GM10248 (cell line): ENCODE measurements at regions of chr6 and their contacts with region 1.

Region 1: GRCh38 chr6:70884074-70884983 is 72.5 kb downstream of the B3GAT2 start:
- DNase-seq: peak; percentile 80
- CTCF ChIP-seq: peak; percentile 90

Region 2: DNA sequence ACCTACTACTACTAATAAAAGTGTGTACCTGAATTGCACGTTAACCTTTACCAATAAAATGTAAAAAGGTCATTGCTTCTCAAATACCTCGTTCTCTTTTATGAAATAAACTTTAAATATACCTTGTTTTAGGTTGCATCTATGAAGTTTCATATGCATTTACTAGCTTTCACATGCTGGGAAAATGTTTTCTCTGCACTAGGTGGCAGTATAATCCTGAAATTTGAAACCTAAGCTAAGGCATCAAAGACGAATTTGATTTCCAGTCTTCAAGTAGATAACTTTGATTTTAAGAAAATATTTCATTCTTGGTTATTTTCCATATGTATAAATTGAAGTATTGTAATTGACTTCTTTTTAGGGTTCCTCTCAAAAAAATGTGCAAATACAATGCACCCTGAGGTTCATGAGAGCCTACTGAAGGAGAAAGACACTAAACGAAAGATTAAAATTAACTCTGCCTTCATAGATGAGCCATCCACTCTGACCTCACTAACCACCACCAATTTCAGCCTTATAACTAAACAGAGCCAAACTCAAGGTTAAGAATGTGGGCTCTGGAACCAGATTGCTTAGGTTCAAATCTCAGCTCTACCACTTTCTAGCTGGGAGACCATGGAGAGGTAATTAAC is 574.1 kb before region 1 on chr6:
- CTCF ChIA-PET with region 1: interaction called, 29 read pairs
- POLR2A ChIA-PET with region 1: no interaction called
- DNase-seq: no peak
- CTCF ChIP-seq: peak; percentile 64

Region 3: GRCh38 chr6:70700922-70701876 is 183.1 kb before region 1 on chr6:
- CTCF ChIA-PET with region 1: interaction called, 45 read pairs
- POLR2A ChIA-PET with region 1: interaction called, 3 read pairs
- DNase-seq: no peak
- CTCF ChIP-seq: no peak

Region 4: DNA sequence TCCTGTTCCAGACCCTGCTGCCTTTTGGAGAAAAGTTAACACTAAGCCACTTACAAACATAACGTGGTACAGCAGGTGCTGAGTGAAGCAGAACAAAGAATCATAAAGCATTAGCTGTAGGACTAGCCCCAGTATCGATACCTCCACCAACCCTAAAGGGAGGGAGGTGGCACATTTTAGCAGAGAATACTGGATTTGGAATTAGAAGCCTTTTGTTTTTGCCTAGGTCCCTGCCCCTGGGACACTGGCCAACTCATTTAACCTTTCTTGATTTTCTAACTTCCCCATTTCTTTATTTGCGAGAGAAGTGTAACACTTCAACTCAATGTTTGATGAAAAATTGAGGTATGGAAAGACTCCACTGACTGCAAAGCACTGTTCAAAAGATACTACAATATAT is 21.0 kb before region 1 on chr6:
- CTCF ChIA-PET with region 1: interaction called, 14 read pairs
- POLR2A ChIA-PET with region 1: no interaction called
- DNase-seq: no peak
- CTCF ChIP-seq: no peak

Region 5: GRCh38 chr6:70955441-70956190 is 71.3 kb after region 1 on chr6:
- CTCF ChIA-PET with region 1: interaction called, 11 read pairs
- POLR2A ChIA-PET with region 1: no interaction called
- DNase-seq: peak; percentile 85
- CTCF ChIP-seq: peak; percentile 97